ENCODE measurements at regions of chr2 and their contacts with region 1.

Region 1: GRCh38 chr2:170928824-170929685 is at the start of gene GORASP2:
- DNase-seq: peak; percentile 97
- ATAC-seq: peak; percentile 92
- H3K4me3 ChIP-seq: peak within 1 kb of the TSS; percentile 90
- H3K27ac ChIP-seq: peak within 1 kb of the TSS; percentile 88
- H3K4me1 ChIP-seq: no peaks in the 10 kb centered on the region
- H3K27me3 ChIP-seq: no peaks in the 10 kb centered on the region
- CTCF ChIP-seq: peak; percentile 76 to 94 (median 79)
- EP300 ChIP-seq: no peak
- POLR2A ChIP-seq: peak; percentile 98
- RAD21 ChIP-seq: peak; percentile 57; the same call in 1 of the 2 replicates
- polyA plus RNA-seq, gene GORASP2: 26.3 to 35.0 TPM

Region 2: DNA sequence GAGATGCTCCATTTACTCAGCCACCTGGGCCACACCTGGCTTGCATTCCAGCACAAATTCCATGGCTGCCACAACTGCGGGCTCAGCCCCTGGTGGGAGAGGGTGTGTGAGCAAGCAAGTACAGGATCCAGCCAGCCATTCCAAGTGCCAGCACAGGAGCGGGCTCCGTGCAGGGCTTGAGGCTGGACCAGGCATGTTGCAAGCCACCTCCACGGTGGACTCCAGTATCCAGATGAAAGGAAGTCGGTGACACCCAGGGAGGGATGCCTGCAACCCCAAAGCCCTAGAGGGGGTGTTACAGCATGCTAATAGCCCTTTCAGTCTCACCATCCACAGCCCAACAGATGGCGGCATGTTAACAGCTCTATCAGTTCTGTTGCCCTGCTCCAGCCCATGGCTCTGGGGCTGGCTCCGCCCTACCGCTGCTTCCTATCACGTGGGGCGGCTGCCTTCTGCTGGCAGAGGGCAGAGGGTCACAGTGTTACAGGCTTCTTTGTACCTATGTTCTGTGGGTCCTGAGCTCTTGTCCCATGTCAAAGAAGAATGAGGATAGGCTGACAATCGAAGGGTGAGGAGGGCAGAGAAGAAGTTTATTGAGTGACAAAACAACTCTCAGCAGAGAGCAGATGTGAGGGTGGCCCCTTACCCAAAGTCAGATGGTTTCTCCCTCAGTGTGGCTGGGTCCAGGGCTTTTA is 11.7 kb before region 1 on chr2:
- CTCF ChIA-PET with region 1: no interaction called
- POLR2A ChIA-PET with region 1: no interaction called
- RAD21 ChIA-PET with region 1: no interaction called
- SMC1A ChIA-PET with region 1: no interaction called
- in situ Hi-C with region 1: no loop called
- intact Hi-C with region 1: no loop called
- DNase-seq: no peak
- ATAC-seq: no peak
- H3K4me3 ChIP-seq: no peak overlapping the region
- H3K27ac ChIP-seq: no peak overlapping the region
- H3K4me1 ChIP-seq: no peaks in the 10 kb centered on the region
- H3K27me3 ChIP-seq: no peaks in the 10 kb centered on the region
- CTCF ChIP-seq: no peak
- EP300 ChIP-seq: no peak
- POLR2A ChIP-seq: no peak
- RAD21 ChIP-seq: no peak

Region 3: GRCh38 chr2:170940066-170940465 is 11.0 kb after region 1 on chr2:
- CTCF ChIA-PET with region 1: interaction called, 53 read pairs
- POLR2A ChIA-PET with region 1: interaction called, 5 read pairs
- RAD21 ChIA-PET with region 1: interaction called, 11 read pairs
- SMC1A ChIA-PET with region 1: interaction called, 55 read pairs
- in situ Hi-C with region 1: no loop called
- intact Hi-C with region 1: no loop called
- DNase-seq: no peak
- ATAC-seq: peak; percentile 63
- H3K4me3 ChIP-seq: no peak overlapping the region
- H3K27ac ChIP-seq: no peak overlapping the region
- H3K4me1 ChIP-seq: 0 out of 2 replicates have a peak, but pooled peaks cover 2% of the 10 kb centered on the region
- H3K27me3 ChIP-seq: no peaks in the 10 kb centered on the region
- CTCF ChIP-seq: no peak
- EP300 ChIP-seq: no peak
- POLR2A ChIP-seq: no peak
- RAD21 ChIP-seq: no peak

Region 4: GRCh38 chr2:170950221-170950761 is 21.2 kb after region 1 on chr2:
- CTCF ChIA-PET with region 1: interaction called, 40 read pairs
- POLR2A ChIA-PET with region 1: interaction called, 4 read pairs
- RAD21 ChIA-PET with region 1: interaction called, 23 read pairs
- SMC1A ChIA-PET with region 1: interaction called, 55 read pairs
- in situ Hi-C with region 1: no loop called
- intact Hi-C with region 1: no loop called
- DNase-seq: peak; percentile 60
- ATAC-seq: peak; percentile 89
- H3K4me3 ChIP-seq: no peak overlapping the region
- H3K27ac ChIP-seq: peak overlapping the region; percentile 76
- H3K4me1 ChIP-seq: peaks cover 22% of the 10 kb centered on the region
- H3K27me3 ChIP-seq: no peaks in the 10 kb centered on the region
- CTCF ChIP-seq: no peak
- EP300 ChIP-seq: 0 out of 4 replicates have a peak, but pooled peaks have one; percentile 11 to 37
- POLR2A ChIP-seq: no peak
- RAD21 ChIP-seq: no peak

Region 5: DNA sequence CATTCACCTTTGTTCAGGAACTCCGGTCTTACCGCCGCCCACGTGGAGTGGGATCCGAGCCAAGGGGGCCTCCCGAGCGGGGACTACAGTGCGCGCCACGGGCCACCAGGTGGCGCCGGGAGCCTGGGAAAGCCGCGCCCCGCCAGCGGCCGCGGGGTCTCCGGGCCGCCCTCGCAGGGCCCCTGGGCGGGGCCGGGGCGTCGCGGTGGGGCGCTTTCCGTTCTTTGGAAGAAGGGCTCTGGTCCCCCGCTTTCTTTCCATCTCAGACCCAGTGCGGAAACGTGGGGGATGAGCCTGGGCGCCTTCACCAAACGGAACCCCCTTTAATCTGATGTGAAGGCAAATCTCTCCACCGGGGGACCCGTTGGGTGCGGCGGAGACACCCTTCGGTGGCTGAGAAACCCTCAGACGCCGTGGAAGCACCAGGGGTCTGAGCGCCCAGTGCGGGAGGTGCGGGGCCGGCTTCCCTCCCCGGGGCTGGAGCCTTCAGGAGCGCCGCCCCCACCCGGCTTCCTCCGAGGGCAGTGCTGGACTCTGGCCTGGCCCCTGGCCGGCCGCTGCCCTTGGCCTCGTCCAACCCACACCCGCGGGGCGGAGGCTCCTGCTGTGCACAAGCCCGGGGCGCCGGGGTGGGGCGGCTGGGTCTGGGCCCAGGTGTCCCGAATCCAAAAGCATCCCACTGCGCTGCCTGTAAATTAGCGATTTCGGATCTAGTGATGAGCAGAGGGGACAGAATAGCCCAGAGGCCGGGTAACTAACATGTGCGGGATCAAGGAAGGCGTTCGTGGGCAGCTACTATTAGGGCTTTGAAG is 44.6 kb after region 1 on chr2:
- CTCF ChIA-PET with region 1: interaction called, 46 read pairs
- POLR2A ChIA-PET with region 1: interaction called, 5 read pairs
- RAD21 ChIA-PET with region 1: interaction called, 22 read pairs
- SMC1A ChIA-PET with region 1: interaction called, 11 read pairs
- in situ Hi-C with region 1: no loop called
- intact Hi-C with region 1: loop called (anchors 1 kb)
- DNase-seq: peak; percentile 64
- ATAC-seq: peak; percentile 97
- H3K4me3 ChIP-seq: peak overlapping the region; percentile 78
- H3K27ac ChIP-seq: peak overlapping the region; percentile 72
- H3K4me1 ChIP-seq: peaks cover 10% of the 10 kb centered on the region
- H3K27me3 ChIP-seq: no peaks in the 10 kb centered on the region
- CTCF ChIP-seq: peak; percentile 88 to 96 (median 89)
- EP300 ChIP-seq: peak in 1 of 2 experiments; percentile 40; a peak in 1 of 4 replicates
- POLR2A ChIP-seq: peak; percentile 74
- RAD21 ChIP-seq: peak; percentile 90

Region 6: GRCh38 chr2:171433763-171434670 is 505.0 kb after region 1 on chr2 and contains the starts of genes DCAF17 and METTL8:
- CTCF ChIA-PET with region 1: no interaction called
- POLR2A ChIA-PET with region 1: interaction called, 3 read pairs
- RAD21 ChIA-PET with region 1: interaction called, 3 read pairs
- SMC1A ChIA-PET with region 1: no interaction called
- in situ Hi-C with region 1: no loop called
- intact Hi-C with region 1: loop called (anchors 5 kb)
- DNase-seq: peak; percentile 94
- ATAC-seq: peak; percentile 94
- H3K4me3 ChIP-seq: peak within 1 kb of the TSS; percentile 81
- H3K27ac ChIP-seq: peak within 1 kb of the TSS; percentile 93
- H3K4me1 ChIP-seq: peaks cover 13% of the 10 kb centered on the region
- H3K27me3 ChIP-seq: no peaks in the 10 kb centered on the region
- CTCF ChIP-seq: peak; percentile 52 to 72 (median 61)
- EP300 ChIP-seq: no peak
- POLR2A ChIP-seq: peak; percentile 92
- RAD21 ChIP-seq: peak; percentile 33
- polyA plus RNA-seq, gene DCAF17: 5.2 to 5.6 TPM
- polyA plus RNA-seq, gene METTL8: 34.9 to 42.5 TPM

Region 7: GRCh38 chr2:172555522-172556283 is 1626.6 kb after region 1 on chr2 and contains the start of gene PDK1:
- CTCF ChIA-PET with region 1: no interaction called
- POLR2A ChIA-PET with region 1: no interaction called
- RAD21 ChIA-PET with region 1: no interaction called
- SMC1A ChIA-PET with region 1: no interaction called
- in situ Hi-C with region 1: loop called (anchors 25 kb)
- intact Hi-C with region 1: no loop called
- DNase-seq: peak; percentile 54
- ATAC-seq: peak; percentile 96
- H3K4me3 ChIP-seq: peak within 1 kb of the TSS; percentile 80
- H3K27ac ChIP-seq: peak within 1 kb of the TSS; percentile 83
- H3K4me1 ChIP-seq: peaks cover 6% of the 10 kb centered on the region
- H3K27me3 ChIP-seq: no peaks in the 10 kb centered on the region
- CTCF ChIP-seq: no peak
- EP300 ChIP-seq: no peak
- POLR2A ChIP-seq: peak; percentile 91
- RAD21 ChIP-seq: no peak
- polyA plus RNA-seq, gene PDK1: 5.3 to 5.4 TPM